GM10248 (cell line): ENCODE measurements at regions of chr16 and their contacts with region 1.

Region 1: DNA sequence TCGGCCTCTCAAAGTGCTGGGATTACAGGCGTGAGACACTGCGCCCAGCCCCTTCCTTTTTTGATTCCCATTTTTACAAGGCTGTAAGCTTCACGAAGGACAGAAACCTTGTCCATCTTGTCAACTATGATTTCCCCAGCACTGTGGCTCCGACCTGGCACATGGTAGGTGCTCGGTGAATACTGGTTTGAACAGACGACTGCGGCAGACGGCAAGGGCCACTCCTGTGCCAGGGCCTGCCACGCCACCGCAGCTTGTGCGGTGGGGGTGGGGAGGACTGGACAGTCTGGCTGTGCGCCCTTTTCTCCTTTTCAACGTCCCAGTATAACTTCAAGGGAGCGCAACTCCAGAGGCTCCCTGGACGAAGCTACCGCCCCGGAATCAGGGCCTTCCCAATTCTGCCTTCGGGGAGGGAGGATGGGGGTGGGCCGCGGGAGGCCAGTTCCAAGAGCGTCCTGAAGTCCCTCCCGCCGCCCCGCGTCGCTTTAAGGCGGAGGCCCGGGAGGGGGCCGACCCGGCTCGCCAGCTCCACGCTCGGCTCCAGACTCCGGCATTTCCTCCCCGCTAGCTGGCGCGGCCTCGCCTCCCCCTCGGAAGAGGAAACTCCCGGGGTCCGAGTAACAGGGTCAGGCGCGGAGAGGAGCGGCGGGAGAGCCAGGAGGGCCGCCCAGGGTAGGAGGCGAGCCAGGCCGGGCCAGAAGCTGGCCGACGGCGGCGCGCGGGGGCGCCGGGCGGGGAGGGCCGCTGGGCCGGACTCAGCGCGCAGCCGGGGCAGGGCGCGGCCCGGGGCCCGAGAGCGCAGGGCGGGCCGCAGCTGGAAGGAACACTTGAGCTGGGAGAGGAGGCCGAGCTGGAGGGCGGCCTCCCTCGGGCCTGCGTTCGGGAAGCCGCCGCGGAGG is at the start of gene ITPRIPL2:
- DNase-seq: peak; percentile 66
- CTCF ChIP-seq: no peak

Region 2: DNA sequence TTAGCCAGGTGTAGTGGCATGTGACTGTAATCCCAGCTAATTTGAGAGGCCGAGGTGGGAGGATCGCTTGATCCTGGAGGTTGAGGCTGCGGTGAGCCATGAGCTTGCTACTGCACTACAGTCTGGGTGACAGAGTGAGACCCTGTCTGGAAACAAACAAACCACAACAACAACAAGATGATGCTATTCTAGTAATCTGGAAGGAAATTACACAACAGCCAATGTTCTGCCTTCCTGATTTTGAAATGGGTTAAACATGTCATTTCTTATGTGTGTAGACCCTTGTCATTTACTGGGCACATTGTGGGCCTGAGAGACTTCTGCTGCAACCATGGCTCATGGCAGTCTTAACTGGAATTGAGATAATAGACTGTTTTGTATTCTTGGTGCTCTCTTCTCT is 40.4 kb before region 1 on chr16:
- CTCF ChIA-PET with region 1: no interaction called
- POLR2A ChIA-PET with region 1: no interaction called
- DNase-seq: no peak
- CTCF ChIP-seq: no peak

Region 3: DNA sequence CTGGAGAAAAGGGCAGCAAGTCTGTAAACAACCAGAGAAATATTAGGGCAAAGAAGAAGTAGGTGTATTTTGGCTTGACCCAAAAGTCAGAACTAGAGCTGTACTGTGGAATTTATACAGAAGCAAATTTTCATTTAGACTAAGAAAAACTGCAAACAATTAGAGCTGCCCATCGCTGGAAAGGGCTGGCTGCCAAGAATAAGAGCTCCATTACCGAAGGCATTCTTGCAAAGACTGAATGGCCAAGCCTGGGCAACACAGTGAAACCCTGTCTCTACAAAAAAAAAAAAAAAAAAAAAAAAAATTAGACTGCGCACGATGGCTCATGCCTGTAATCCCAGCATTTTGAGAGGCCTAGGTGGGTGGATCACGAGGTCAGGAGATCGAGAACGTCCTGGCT is 250.0 kb after region 1 on chr16:
- CTCF ChIA-PET with region 1: no interaction called
- POLR2A ChIA-PET with region 1: no interaction called
- DNase-seq: no peak
- CTCF ChIP-seq: no peak

Region 4: GRCh38 chr16:19835968-19836421 is 722.3 kb after region 1 on chr16:
- CTCF ChIA-PET with region 1: no interaction called
- POLR2A ChIA-PET with region 1: interaction called, 12 read pairs
- DNase-seq: no peak
- CTCF ChIP-seq: no peak